ENCODE measurements at regions of chr12 and their contacts with region 1.

Region 1: DNA sequence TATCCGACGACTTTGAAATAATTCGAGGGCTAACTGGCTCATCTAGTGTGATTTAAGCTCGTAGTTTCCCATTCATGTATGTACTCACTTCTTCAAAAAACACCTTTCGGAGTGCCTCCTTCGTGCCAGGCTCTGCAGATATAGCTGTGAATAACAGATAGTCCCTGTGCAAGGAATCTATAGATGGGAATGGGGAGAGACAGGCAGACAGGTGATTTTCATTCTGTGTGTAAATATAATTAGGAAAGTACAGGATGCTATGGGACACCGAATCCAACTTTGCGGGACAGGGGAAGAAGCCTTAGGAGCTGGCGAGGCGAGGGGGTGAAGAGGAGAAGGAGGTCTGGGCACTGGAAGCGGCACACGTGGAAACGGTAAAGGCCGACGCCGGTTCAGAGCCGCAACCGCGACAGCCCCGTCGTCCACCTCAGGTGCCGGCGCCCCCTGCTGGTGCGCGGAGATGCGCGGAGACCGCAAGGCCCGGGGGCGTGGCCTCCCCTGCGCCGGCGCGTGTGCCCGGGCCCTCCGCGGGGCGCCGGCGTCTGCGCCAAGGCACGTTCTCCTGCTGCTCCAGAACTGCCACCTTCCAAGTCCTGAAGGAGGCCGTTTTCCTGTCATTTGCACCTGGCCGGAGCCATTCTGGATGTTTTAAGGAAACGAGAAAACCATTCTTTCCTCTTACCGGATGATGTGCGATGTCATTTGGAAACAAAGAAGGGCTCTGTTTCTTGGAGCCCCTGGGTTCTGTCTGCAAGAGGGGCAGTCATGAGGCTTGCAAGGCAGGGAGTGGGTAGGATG is 18.0 kb upstream of the CACNA1C start:
- DNase-seq: peak; percentile 97
- H3K4me3 Mint-ChIP-seq: peak overlapping the region; percentile 63
- H3K27ac Mint-ChIP-seq: peak overlapping the region; percentile 18
- H3K4me1 Mint-ChIP-seq: peaks cover 10% of the 10 kb centered on the region
- H3K27me3 Mint-ChIP-seq: peaks cover 70% of the 10 kb centered on the region

Region 2: DNA sequence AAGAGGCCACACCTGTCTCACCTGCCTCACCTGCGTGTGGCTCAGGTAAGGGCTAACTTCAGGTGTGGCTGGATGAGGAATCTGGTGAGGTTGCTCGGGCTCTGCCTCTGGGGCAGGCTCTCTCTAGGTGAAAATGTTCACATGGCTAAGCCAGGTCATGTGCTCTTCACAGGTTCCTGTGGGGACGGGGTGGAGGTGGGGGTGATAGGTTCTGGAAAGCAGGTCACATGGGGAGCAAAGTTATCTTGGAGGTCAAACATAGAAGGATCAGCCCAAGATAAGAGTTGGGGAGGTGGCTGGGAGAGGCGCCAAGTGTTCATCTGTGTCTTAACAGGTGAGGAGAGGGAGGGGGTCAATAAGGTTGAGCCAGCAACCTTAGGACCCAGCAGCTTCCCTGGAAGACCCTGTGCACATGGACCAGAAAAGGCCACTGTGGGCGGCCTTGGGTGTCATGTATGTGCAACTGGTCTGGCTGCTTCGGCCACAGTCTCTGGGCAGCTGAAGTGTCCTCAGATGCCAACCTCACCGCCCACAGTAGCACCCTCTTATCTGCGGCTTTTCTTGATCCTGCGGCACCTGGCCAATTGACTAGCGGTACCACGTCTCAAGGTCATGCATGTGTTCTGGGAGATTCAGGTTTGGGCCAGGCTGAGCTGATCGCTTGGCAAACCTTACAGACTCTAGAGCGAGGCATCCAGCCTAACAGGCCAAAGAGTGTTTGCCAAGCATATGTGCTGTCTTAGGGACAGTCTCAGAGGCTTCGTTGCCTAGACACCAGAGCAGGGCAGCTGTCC is 78.5 kb after region 1 on chr12:
- intact Hi-C with region 1: no loop called
- DNase-seq: no peak
- H3K4me3 Mint-ChIP-seq: no peak overlapping the region
- H3K27ac Mint-ChIP-seq: no peak overlapping the region
- H3K4me1 Mint-ChIP-seq: no peaks in the 10 kb centered on the region
- H3K27me3 Mint-ChIP-seq: no peaks in the 10 kb centered on the region

Region 3: GRCh38 chr12:2583091-2583497 is 548.3 kb after region 1 on chr12:
- intact Hi-C with region 1: loop called (anchors 5 kb)
- DNase-seq: peak; percentile 90
- H3K4me3 Mint-ChIP-seq: no peak overlapping the region
- H3K27ac Mint-ChIP-seq: no peak overlapping the region
- H3K4me1 Mint-ChIP-seq: no peaks in the 10 kb centered on the region
- H3K27me3 Mint-ChIP-seq: peaks cover 36% of the 10 kb centered on the region

Measured in activated CD4-positive, alpha-beta T cell treated with anti-CD3 and anti-CD28 coated beads, Interleukin-2, amount 10 ng/mL, durations not matched to agents 24 days and 14 days (primary cell).